PC-3 (cell line): ENCODE measurements at regions of chr15 and their contacts with region 1.

Region 1: GRCh38 chr15:59372352-59373211 is at the start of gene MYO1E:
- DNase-seq: peak; percentile 96
- ATAC-seq: peak; percentile 87
- H3K4me3 ChIP-seq: peak within 1 kb of the TSS; percentile 89
- H3K27ac ChIP-seq: peak within 1 kb of the TSS; percentile 53
- H3K4me1 ChIP-seq: peaks cover 33% of the 10 kb centered on the region
- H3K27me3 ChIP-seq: no peaks in the 10 kb centered on the region
- CTCF ChIP-seq: no peak
- total RNA-seq, gene MYO1E: 67.7 and 68.8 TPM in 2 replicates

Region 2: DNA sequence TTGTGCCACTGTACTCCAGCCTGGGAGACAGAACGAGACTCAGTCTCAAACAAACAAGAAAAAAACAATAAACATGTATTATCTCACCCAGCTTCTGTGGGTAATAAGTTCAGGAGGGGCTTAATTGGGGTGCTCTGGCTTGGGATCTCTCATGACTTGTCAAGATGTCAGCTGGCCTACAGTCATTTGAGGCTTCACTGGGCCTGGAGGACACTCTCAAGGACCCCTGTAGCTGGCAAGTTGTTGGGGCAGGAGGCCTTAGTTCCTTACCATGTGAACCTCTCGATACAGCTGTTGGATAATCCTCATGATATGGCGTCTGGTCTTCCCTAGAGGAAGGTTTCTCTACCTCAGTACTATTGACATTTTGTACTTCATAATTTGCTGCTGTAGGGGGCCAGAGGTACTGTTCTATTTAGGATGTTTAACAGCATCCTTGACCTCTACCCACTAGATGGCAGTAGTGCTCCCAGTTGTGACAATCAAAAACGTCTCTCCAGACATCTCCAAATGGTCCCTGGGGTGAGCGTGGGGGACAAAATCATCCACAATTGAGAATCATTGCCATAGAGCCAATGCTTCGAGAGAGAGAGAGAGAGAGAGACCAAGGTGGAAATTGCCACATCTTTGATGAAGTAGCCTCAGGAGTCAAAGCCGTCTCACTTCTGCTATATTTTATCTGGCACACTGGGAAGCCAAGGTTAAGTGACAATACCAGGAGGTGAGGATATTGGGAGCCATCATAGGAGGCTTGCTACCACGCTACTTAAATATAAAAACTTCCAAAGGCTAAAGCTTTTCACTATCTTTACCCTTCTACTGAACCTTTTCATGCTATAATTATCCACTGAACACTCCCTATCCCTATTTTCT is 415.2 kb before region 1 on chr15:
- CTCF ChIA-PET with region 1: no interaction called
- POLR2A ChIA-PET with region 1: no interaction called
- intact Hi-C with region 1: loop called (anchors 10 kb)
- DNase-seq: peak; percentile 90
- ATAC-seq: peak; percentile 89
- H3K4me3 ChIP-seq: 0 out of 2 replicates have a peak overlapping the region, but pooled peaks have one; percentile 34
- H3K27ac ChIP-seq: no peak overlapping the region
- H3K4me1 ChIP-seq: peaks cover 20% of the 10 kb centered on the region
- H3K27me3 ChIP-seq: no peaks in the 10 kb centered on the region
- CTCF ChIP-seq: peak; percentile 89

Region 3: DNA sequence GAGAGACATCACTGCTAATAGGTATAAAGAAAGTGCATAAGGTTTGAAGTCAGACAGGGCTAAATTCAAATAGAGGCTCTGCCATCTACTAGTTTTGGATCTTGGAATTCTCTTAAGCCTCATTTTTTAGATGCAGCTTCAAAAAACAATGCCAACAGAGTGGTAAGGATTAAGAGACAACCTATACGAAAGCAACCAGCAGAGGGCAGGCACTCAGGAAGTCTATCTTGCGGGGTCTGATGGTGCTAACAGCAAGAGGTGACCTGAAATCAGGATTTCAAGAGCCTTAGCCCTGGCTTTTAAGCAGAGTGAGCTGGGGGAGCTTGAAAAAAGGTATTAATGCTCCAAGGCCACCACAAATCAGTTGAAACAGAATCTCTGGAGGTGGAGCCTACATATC is 125.2 kb before region 1 on chr15:
- CTCF ChIA-PET with region 1: interaction called, 6 read pairs
- POLR2A ChIA-PET with region 1: no interaction called
- intact Hi-C with region 1: loop called (anchors 10 kb)
- DNase-seq: peak; percentile 72
- ATAC-seq: peak; percentile 79
- H3K4me3 ChIP-seq: no peak overlapping the region
- H3K27ac ChIP-seq: no peak overlapping the region
- H3K4me1 ChIP-seq: 0 out of 2 replicates have a peak, but pooled peaks cover 11% of the 10 kb centered on the region
- H3K27me3 ChIP-seq: no peaks in the 10 kb centered on the region
- CTCF ChIP-seq: peak; percentile 72

Region 4: GRCh38 chr15:59283717-59284336 is 88.8 kb before region 1 on chr15:
- CTCF ChIA-PET with region 1: no interaction called
- POLR2A ChIA-PET with region 1: interaction called, 7 read pairs
- intact Hi-C with region 1: loop called (anchors 2 kb)
- DNase-seq: peak; percentile 98
- ATAC-seq: peak; percentile 97
- H3K4me3 ChIP-seq: peak overlapping the region; percentile 43; the same call in 1 of the 2 replicates
- H3K27ac ChIP-seq: peak overlapping the region; percentile 97
- H3K4me1 ChIP-seq: peaks cover 54% of the 10 kb centered on the region
- H3K27me3 ChIP-seq: no peaks in the 10 kb centered on the region
- CTCF ChIP-seq: no peak

Region 5: GRCh38 chr15:59396679-59397078 is 24.1 kb after region 1 on chr15:
- CTCF ChIA-PET with region 1: no interaction called
- POLR2A ChIA-PET with region 1: no interaction called
- intact Hi-C with region 1: no loop called
- DNase-seq: no peak
- ATAC-seq: peak; percentile 31
- H3K4me3 ChIP-seq: no peak overlapping the region
- H3K27ac ChIP-seq: no peak overlapping the region
- H3K4me1 ChIP-seq: peaks cover 12% of the 10 kb centered on the region
- H3K27me3 ChIP-seq: no peaks in the 10 kb centered on the region
- CTCF ChIP-seq: no peak; the same call in 1 of the 2 replicates

Region 6: GRCh38 chr15:59420986-59421618 is 48.5 kb after region 1 on chr15:
- CTCF ChIA-PET with region 1: no interaction called
- POLR2A ChIA-PET with region 1: no interaction called
- intact Hi-C with region 1: no loop called
- DNase-seq: peak; percentile 6
- ATAC-seq: no peak
- H3K4me3 ChIP-seq: no peak overlapping the region
- H3K27ac ChIP-seq: no peak overlapping the region
- H3K4me1 ChIP-seq: no peaks in the 10 kb centered on the region
- H3K27me3 ChIP-seq: no peaks in the 10 kb centered on the region
- CTCF ChIP-seq: no peak

Region 7: GRCh38 chr15:59492389-59493377 is 120.1 kb after region 1 on chr15:
- CTCF ChIA-PET with region 1: interaction called, 3 read pairs
- POLR2A ChIA-PET with region 1: no interaction called
- intact Hi-C with region 1: loop called (anchors 2 kb)
- DNase-seq: peak; percentile 77
- ATAC-seq: peak; percentile 95
- H3K4me3 ChIP-seq: no peak overlapping the region
- H3K27ac ChIP-seq: no peak overlapping the region
- H3K4me1 ChIP-seq: peaks cover 8% of the 10 kb centered on the region; the same call in 1 of the 2 replicates
- H3K27me3 ChIP-seq: no peaks in the 10 kb centered on the region
- CTCF ChIP-seq: peak; percentile 78